Prostate gland (tissue), 2 donors: ENCODE measurements at regions of chr3 and their contacts with region 1.

Region 1: GRCh38 chr3:108662130-108662738 is 72.7 kb downstream of the DZIP3 start:
- DNase-seq: peak; percentile 8
- H3K4me3 ChIP-seq: no peak overlapping the region
- H3K27ac ChIP-seq: no peak overlapping the region
- H3K4me1 ChIP-seq: no peaks in the 10 kb centered on the region
- H3K27me3 ChIP-seq: no peaks in the 10 kb centered on the region
- CTCF ChIP-seq: peak; percentile 28 to 79 (median 74)
- POLR2A ChIP-seq: no peak

Region 2: DNA sequence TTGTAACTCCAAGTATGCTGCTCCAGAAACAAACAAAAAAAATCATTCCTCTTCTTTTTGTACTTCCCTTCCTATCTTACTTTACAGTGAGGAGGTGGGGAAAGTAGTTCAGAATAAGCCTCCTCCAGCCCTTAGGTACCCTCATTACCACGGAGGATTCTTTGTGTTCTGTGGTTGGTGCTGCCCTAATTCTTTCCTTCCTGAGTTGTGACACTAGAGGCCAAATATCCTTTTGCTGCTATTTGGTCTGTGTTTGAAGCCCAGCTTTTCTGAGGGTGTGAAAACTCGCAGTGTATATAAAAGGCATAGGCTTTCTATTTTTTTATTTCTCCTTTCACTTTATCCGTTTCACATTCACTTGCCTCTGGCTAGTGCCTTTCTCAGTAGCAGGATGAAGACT is 267.7 kb before region 1 on chr3:
- intact Hi-C with region 1: no loop called
- DNase-seq: no peak
- H3K4me3 ChIP-seq: no peak overlapping the region
- H3K27ac ChIP-seq: no peak overlapping the region
- H3K4me1 ChIP-seq: no peaks in the 10 kb centered on the region
- H3K27me3 ChIP-seq: no peaks in the 10 kb centered on the region
- CTCF ChIP-seq: no peak
- POLR2A ChIP-seq: no peak

Region 3: DNA sequence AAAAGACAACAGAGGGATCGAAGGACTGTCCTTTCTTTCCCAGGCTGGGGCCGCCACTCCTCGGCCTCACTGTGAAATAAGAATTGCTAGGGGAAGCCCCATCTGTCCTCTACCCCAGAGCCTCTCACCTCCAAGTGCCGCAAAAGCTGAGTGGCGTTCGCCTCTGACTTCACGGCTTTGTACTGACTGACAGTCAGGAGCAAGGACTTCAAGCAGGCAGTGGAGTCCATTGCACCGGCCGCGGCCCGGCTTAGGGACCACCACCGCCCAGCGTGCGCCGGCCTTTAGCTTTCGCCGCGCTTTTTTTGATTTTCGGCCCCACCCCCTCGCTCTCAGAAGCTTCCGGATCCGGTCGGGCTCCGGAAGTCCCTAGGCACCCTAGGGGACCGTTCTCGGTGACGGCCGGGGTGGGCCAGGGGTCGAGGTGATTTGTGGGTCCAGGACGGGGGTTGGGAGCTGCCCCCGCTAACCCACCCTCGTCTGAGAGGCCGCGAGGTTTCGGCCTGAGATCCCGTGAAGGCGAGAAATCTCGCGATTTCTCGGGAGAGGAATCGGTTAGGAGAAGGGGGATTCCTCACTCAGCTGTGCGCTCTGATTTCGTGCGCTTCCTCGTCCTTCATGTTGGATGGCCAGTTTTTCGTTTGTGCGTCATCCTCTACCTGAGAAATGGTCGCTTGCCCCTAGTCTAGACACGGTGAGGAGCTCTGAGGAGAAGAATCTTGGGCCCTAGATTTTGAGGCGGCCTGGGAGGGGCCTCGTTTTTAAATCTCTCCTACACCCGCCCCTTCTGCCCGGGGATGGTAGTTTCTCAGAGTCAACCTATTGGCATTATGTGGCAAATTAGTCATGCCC is 72.9 kb before region 1 on chr3 and contains the starts of genes CIP2A and DZIP3:
- intact Hi-C with region 1: no loop called
- DNase-seq: peak; percentile 65
- H3K4me3 ChIP-seq: peak within 1 kb of the TSS; percentile 55 to 75
- H3K27ac ChIP-seq: peak within 1 kb of the TSS; percentile 88 to 90
- H3K4me1 ChIP-seq: no peaks in the 10 kb centered on the region
- H3K27me3 ChIP-seq: no peaks in the 10 kb centered on the region
- CTCF ChIP-seq: peak in 2 of 4 experiments; percentile 4 to 18
- POLR2A ChIP-seq: peak; percentile 54
- total RNA-seq, gene CIP2A: 2.0 to 13.8 TPM
- total RNA-seq, gene DZIP3: 9.8 to 22.2 TPM

Region 4: DNA sequence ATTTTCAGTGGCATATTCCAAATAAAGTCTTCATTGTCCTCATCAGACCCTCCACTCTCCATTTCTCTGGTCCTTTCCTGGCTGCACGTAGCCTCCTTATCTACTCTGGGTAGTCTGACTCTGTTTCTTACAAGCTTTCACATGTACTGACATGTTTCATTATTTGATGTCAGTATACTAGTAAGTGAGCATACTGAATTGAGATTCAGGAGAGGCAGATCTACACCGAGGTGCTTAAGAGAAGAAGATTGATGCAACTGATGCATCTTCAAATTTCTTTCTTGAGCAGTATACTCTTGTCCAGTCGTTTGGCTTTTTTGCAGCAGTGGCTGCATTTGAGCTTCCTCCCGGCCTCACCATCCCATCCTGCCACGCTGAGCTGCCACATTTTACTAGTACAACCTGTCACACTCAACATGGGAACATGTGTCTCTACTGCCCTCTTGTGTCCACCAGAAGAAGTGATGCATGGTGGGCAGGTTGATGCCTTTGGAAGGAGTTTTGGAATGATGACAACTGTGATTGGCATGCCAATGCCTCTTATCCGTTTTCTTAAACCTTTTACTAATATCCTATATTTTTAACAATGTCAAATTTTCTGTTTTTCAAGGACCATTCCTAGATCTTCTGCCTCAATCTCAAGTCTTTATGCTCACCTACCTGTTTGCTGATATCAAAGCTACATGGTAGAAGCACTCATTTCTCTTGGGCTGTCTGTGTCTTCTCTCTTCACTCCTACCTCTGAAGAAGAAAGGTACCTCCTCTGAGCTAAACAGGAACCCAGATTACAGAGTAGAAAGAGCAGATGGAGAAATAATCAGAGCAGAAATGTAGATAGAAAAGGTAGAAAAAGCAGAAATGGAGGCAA is 252.8 kb after region 1 on chr3:
- intact Hi-C with region 1: loop called (anchors 2 kb)
- DNase-seq: peak; percentile 10
- H3K4me3 ChIP-seq: no peak overlapping the region
- H3K27ac ChIP-seq: no peak overlapping the region
- H3K4me1 ChIP-seq: no peaks in the 10 kb centered on the region
- H3K27me3 ChIP-seq: no peaks in the 10 kb centered on the region
- CTCF ChIP-seq: peak; percentile 31 to 72 (median 60)
- POLR2A ChIP-seq: no peak